HepG2 (cell line): ENCODE measurements at regions of chr12 and their contacts with region 1.

Region 1: GRCh38 chr12:70576346-70577282 is 60.6 kb downstream of the PTPRB start:
- DNase-seq: peak; percentile 64
- ATAC-seq: peak; percentile 81
- H3K4me3 ChIP-seq: no peak overlapping the region
- H3K27ac ChIP-seq: no peak overlapping the region
- H3K4me1 ChIP-seq: peaks cover 8% of the 10 kb centered on the region
- H3K27me3 ChIP-seq: no peaks in the 10 kb centered on the region
- CTCF ChIP-seq: peak; percentile 79
- EP300 ChIP-seq: no peak
- POLR2A ChIP-seq: no peak
- RAD21 ChIP-seq: peak; percentile 73

Region 2: GRCh38 chr12:69879041-69879960 is 697.3 kb before region 1 on chr12:
- CTCF ChIA-PET with region 1: interaction called, 11 read pairs
- POLR2A ChIA-PET with region 1: no interaction called
- in situ Hi-C with region 1: no loop called
- intact Hi-C with region 1: loop called (anchors 1 kb)
- DNase-seq: peak; percentile 51
- ATAC-seq: peak; percentile 97
- H3K4me3 ChIP-seq: no peak overlapping the region
- H3K27ac ChIP-seq: no peak overlapping the region
- H3K4me1 ChIP-seq: no peaks in the 10 kb centered on the region
- H3K27me3 ChIP-seq: peaks cover 0 to 13% of the 10 kb centered on the region in 2 experiments; a peak in 2 of 5 replicates
- CTCF ChIP-seq: peak; percentile 84
- EP300 ChIP-seq: no peak
- POLR2A ChIP-seq: no peak
- RAD21 ChIP-seq: peak; percentile 76

Region 3: DNA sequence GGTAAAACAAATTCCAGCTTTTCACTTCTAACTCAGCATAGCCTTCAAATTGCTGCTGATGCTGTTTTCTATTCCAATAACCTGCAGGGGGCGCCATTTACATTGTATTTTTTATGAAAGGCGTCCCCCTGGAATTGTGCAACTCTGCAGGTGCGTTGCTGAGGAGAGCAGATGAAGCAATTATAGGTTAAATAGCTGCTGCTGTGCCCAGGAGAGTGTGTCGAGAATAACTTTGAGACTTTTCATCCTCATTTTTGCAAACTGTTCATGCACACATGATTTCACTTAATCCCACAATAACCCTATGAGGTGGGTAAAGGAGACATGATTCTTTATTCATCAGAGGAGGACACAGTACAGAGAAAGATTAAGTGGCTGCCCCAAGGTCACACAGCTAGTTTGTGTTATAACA is 675.9 kb before region 1 on chr12:
- CTCF ChIA-PET with region 1: interaction called, 26 read pairs
- POLR2A ChIA-PET with region 1: no interaction called
- in situ Hi-C with region 1: loop called (anchors 10 kb)
- intact Hi-C with region 1: loop called (anchors 1 kb)
- DNase-seq: peak; percentile 76
- ATAC-seq: peak; percentile 84
- H3K4me3 ChIP-seq: no peak overlapping the region
- H3K27ac ChIP-seq: no peak overlapping the region
- H3K4me1 ChIP-seq: no peaks in the 10 kb centered on the region
- H3K27me3 ChIP-seq: no peaks in the 10 kb centered on the region
- CTCF ChIP-seq: peak; percentile 80
- EP300 ChIP-seq: no peak
- POLR2A ChIP-seq: no peak
- RAD21 ChIP-seq: peak; percentile 68

Region 4: GRCh38 chr12:69985656-69986055 is 591.0 kb before region 1 on chr12:
- CTCF ChIA-PET with region 1: no interaction called
- POLR2A ChIA-PET with region 1: no interaction called
- in situ Hi-C with region 1: no loop called
- intact Hi-C with region 1: loop called (anchors 10 kb)
- DNase-seq: peak; percentile 24
- ATAC-seq: peak; percentile 98
- H3K4me3 ChIP-seq: no peak overlapping the region
- H3K27ac ChIP-seq: no peak overlapping the region
- H3K4me1 ChIP-seq: no peaks in the 10 kb centered on the region
- H3K27me3 ChIP-seq: no peaks in the 10 kb centered on the region
- CTCF ChIP-seq: peak; percentile 64
- EP300 ChIP-seq: no peak
- POLR2A ChIP-seq: no peak
- RAD21 ChIP-seq: 0 out of 2 replicates have a peak, but pooled peaks have one; percentile 34

Region 5: GRCh38 chr12:70365648-70366518 is 210.7 kb before region 1 on chr12 and contains the start of gene KCNMB4:
- CTCF ChIA-PET with region 1: no interaction called
- POLR2A ChIA-PET with region 1: no interaction called
- in situ Hi-C with region 1: no loop called
- intact Hi-C with region 1: loop called (anchors 5 kb)
- DNase-seq: peak; percentile 36
- ATAC-seq: peak; percentile 88
- H3K4me3 ChIP-seq: peak within 1 kb of the TSS; percentile 69 to 78 (median 77)
- H3K27ac ChIP-seq: no peak within 1 kb of the TSS
- H3K4me1 ChIP-seq: peaks cover 20% of the 10 kb centered on the region
- H3K27me3 ChIP-seq: peaks cover 0 to 21% of the 10 kb centered on the region in 2 experiments; a peak in 4 of 5 replicates
- CTCF ChIP-seq: no peak
- EP300 ChIP-seq: no peak
- POLR2A ChIP-seq: no peak
- RAD21 ChIP-seq: no peak
- total RNA-seq, gene KCNMB4: 0.84 and 1.7 TPM in 2 replicates

Region 6: GRCh38 chr12:70535896-70536374 is 40.7 kb before region 1 on chr12:
- CTCF ChIA-PET with region 1: no interaction called
- POLR2A ChIA-PET with region 1: no interaction called
- in situ Hi-C with region 1: no loop called
- intact Hi-C with region 1: no loop called
- DNase-seq: peak; percentile 31
- ATAC-seq: no peak
- H3K4me3 ChIP-seq: no peak overlapping the region
- H3K27ac ChIP-seq: peak overlapping the region; percentile 23
- H3K4me1 ChIP-seq: peaks cover 15% of the 10 kb centered on the region
- H3K27me3 ChIP-seq: no peaks in the 10 kb centered on the region
- CTCF ChIP-seq: no peak
- EP300 ChIP-seq: no peak
- POLR2A ChIP-seq: no peak
- RAD21 ChIP-seq: no peak

Region 7: DNA sequence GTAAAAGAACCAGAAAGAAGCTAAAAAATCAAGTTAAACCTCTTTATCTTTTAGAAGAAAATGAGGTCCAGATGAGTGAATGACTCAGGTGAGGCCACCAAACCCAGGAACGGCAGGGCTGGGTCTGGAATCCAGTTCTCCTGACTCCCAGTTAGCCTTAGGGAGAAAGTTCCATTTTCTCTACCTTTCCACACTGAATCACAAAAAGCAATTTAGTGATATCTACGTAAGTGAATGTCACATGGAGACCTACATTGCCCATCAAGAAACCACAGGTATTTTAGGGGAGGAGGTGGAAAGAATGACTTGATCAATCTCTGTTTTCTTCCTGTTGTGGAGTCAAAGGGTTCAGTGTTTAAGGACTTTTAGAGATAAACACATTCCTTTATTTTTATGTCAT is 167.5 kb after region 1 on chr12:
- CTCF ChIA-PET with region 1: no interaction called
- POLR2A ChIA-PET with region 1: no interaction called
- in situ Hi-C with region 1: no loop called
- intact Hi-C with region 1: no loop called
- DNase-seq: no peak
- ATAC-seq: no peak
- H3K4me3 ChIP-seq: no peak overlapping the region
- H3K27ac ChIP-seq: no peak overlapping the region
- H3K4me1 ChIP-seq: no peaks in the 10 kb centered on the region
- H3K27me3 ChIP-seq: 0 out of 5 replicates have a peak, but pooled peaks cover 0 to 3% of the 10 kb centered on the region in 2 experiments
- CTCF ChIP-seq: no peak
- EP300 ChIP-seq: no peak
- POLR2A ChIP-seq: no peak
- RAD21 ChIP-seq: no peak

Region 8: GRCh38 chr12:71014180-71014785 is 437.7 kb after region 1 on chr12:
- CTCF ChIA-PET with region 1: no interaction called
- POLR2A ChIA-PET with region 1: no interaction called
- in situ Hi-C with region 1: no loop called
- intact Hi-C with region 1: loop called (anchors 10 kb)
- DNase-seq: peak; percentile 5
- ATAC-seq: peak; percentile 41; the same call in 1 of the 3 replicates
- H3K4me3 ChIP-seq: no peak overlapping the region
- H3K27ac ChIP-seq: no peak overlapping the region
- H3K4me1 ChIP-seq: no peaks in the 10 kb centered on the region
- H3K27me3 ChIP-seq: no peaks in the 10 kb centered on the region
- CTCF ChIP-seq: peak; percentile 46
- EP300 ChIP-seq: no peak
- POLR2A ChIP-seq: no peak
- RAD21 ChIP-seq: no peak